Breast epithelium (tissue), 4 donors: ENCODE measurements at regions of chr1 and their contacts with region 1.

Region 1: DNA sequence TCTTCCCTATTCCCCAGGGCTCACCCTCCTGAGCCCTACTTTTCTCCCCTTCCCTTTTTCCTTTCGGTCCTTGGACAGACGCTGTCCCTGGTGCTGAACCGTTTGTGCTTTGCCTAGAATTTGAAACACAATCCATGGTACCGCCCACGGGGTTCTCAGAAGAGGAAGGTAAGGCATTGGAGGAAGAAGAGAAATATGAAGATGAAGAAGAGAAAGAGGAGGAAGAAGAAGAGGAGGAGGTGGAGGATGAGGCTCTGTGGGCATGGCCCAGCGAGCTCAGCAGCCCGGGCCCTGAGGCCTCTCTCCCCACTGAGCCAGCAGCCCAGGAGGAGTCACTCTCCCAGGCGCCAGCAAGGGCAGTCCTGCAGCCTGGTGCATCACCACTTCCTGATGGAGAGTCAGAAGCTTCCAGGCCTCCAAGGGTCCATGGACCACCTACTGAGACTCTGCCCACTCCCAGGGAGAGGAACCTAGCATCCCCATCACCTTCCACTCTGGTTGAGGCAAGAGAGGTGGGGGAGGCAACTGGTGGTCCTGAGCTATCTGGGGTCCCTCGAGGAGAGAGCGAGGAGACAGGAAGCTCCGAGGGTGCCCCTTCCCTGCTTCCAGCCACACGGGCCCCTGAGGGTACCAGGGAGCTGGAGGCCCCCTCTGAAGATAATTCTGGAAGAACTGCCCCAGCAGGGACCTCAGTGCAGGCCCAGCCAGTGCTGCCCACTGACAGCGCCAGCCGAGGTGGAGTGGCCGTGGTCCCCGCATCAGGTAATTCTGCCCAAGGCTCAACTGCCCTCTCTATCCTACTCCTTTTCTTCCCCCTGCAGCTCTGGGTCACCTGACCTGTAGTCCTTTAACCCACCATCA is 10.4 kb downstream of the BCAN start:
- DNase-seq: no peak
- H3K4me3 ChIP-seq: no peak overlapping the region
- H3K27ac ChIP-seq: no peak overlapping the region
- H3K4me1 ChIP-seq: peaks cover 0 to 9% of the 10 kb centered on the region in 2 donors
- H3K27me3 ChIP-seq: no peaks in the 10 kb centered on the region
- CTCF ChIP-seq: no peak
- POLR2A ChIP-seq: no peak

Region 2: GRCh38 chr1:154784924-154785531 is 1867.3 kb before region 1 on chr1:
- intact Hi-C with region 1: loop called (anchors 5 kb)
- DNase-seq: no peak
- H3K4me3 ChIP-seq: no peak overlapping the region
- H3K27ac ChIP-seq: no peak overlapping the region
- H3K4me1 ChIP-seq: no peaks in the 10 kb centered on the region
- H3K27me3 ChIP-seq: no peaks in the 10 kb centered on the region
- CTCF ChIP-seq: no peak
- POLR2A ChIP-seq: no peak

Region 3: GRCh38 chr1:155834296-155834926 is 818.0 kb before region 1 on chr1:
- intact Hi-C with region 1: no loop called
- DNase-seq: no peak
- H3K4me3 ChIP-seq: no peak overlapping the region
- H3K27ac ChIP-seq: no peak overlapping the region
- H3K4me1 ChIP-seq: no peaks in the 10 kb centered on the region
- H3K27me3 ChIP-seq: no peaks in the 10 kb centered on the region
- CTCF ChIP-seq: no peak
- POLR2A ChIP-seq: no peak

Region 4: GRCh38 chr1:156045076-156045475 is 607.3 kb before region 1 on chr1:
- intact Hi-C with region 1: no loop called
- DNase-seq: no peak
- H3K4me3 ChIP-seq: no peak overlapping the region
- H3K27ac ChIP-seq: no peak overlapping the region
- H3K4me1 ChIP-seq: no peaks in the 10 kb centered on the region
- H3K27me3 ChIP-seq: no peaks in the 10 kb centered on the region
- CTCF ChIP-seq: no peak
- POLR2A ChIP-seq: no peak

Region 5: DNA sequence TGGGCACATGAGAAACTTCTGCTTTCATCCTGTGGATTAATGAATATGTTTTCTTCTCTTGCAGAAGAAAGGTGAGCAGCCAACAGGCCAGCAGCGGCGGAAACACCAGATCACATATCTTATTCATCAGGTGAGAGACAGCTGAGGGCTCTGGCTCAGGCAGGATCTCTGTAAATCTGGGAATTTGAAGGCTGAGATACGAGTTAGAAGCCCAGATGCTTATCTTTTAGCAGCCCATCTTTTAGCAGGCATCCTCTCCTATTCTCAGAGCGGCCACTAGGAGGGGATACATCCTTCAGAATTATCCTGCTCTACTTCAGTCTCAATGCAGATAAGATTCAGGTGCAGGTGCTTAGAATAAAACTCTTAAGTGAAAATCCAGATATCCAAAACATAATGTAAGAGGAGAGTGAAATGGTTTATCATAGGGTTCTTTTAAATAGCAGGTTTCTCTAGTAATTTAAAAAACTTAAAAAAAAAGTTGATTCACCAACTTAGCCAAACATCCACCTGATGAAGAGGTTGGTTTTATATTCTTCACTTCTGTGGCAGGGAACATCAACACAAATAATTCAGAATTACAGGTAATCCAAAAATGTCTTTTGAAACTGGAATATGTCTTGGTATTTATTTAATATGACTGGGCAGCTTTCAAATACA is 145.0 kb after region 1 on chr1:
- intact Hi-C with region 1: no loop called
- DNase-seq: no peak
- H3K4me3 ChIP-seq: no peak overlapping the region
- H3K27ac ChIP-seq: no peak overlapping the region
- H3K4me1 ChIP-seq: no peaks in the 10 kb centered on the region
- H3K27me3 ChIP-seq: no peaks in the 10 kb centered on the region
- CTCF ChIP-seq: peak; percentile 17 to 47 (median 40)
- POLR2A ChIP-seq: no peak